Activated B cell treated with CpG ODN at 0.5 μM for 24 hours (primary cell): ENCODE measurements at regions of chr5 and their contacts with region 1.

Region 1: DNA sequence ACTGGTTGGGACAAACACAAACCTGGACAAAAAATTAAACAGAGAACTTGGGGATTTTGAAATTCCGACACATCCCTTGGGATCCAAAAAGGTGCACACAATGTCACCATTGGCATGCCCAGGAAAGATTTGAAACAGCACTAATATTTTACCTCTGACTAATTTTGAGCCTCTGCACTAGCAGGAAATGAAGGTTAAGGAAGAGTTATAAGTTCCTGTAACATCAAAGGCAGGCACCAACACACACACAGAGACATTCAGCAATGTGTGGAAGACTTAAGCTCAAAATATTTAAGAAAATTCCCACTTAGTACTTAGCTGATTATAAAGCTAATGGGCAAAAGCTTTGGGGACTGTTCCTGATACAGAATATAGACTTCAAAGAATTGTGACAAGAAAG is 247.0 kb downstream of the CDH9 start:
- DNase-seq: no peak
- ATAC-seq: no peak
- H3K4me3 Mint-ChIP-seq: no peak overlapping the region
- H3K27ac Mint-ChIP-seq: no peak overlapping the region
- H3K4me1 Mint-ChIP-seq: no peaks in the 10 kb centered on the region
- H3K27me3 Mint-ChIP-seq: no peaks in the 10 kb centered on the region
- CTCF ChIP-seq: no peak

Region 2: DNA sequence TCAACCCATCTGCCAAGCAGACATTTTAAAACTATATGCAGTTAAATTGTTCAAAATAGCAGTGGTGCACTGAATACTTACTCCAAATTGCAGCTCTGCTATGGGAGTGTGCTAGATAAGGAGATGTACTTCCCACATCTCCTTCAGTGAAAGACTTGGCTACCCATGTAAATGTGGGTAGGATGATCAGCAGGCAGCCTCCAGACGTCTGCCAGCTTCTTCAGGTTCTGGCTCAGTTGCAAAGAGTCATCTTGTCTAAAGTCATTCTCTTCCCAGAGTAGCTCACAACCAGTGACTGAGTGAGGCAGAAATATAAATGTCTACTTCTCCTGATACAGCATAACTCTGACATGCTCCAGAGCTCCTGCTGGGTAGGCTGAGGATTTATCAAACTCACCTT is 1096.6 kb before region 1 on chr5:
- CTCF ChIA-PET with region 1: no interaction called
- POLR2A ChIA-PET with region 1: no interaction called
- intact Hi-C with region 1: no loop called
- DNase-seq: no peak
- ATAC-seq: no peak
- H3K4me3 Mint-ChIP-seq: no peak overlapping the region
- H3K27ac Mint-ChIP-seq: no peak overlapping the region
- H3K4me1 Mint-ChIP-seq: no peaks in the 10 kb centered on the region
- H3K27me3 Mint-ChIP-seq: no peaks in the 10 kb centered on the region
- CTCF ChIP-seq: no peak

Region 3: GRCh38 chr5:26802944-26803343 is 11.5 kb after region 1 on chr5:
- CTCF ChIA-PET with region 1: no interaction called
- POLR2A ChIA-PET with region 1: no interaction called
- intact Hi-C with region 1: loop called (anchors 1 kb)
- DNase-seq: no peak
- ATAC-seq: no peak
- H3K4me3 Mint-ChIP-seq: no peak overlapping the region
- H3K27ac Mint-ChIP-seq: no peak overlapping the region
- H3K4me1 Mint-ChIP-seq: no peaks in the 10 kb centered on the region
- H3K27me3 Mint-ChIP-seq: no peaks in the 10 kb centered on the region
- CTCF ChIP-seq: no peak